Activated CD4-positive, alpha-beta T cell treated with anti-CD3 and anti-CD28 coated beads, Interleukin-2, amount 10 ng/mL, durations not matched to agents 24 days and 14 days (primary cell): ENCODE measurements at regions of chr2 and their contacts with region 1.

Region 1: DNA sequence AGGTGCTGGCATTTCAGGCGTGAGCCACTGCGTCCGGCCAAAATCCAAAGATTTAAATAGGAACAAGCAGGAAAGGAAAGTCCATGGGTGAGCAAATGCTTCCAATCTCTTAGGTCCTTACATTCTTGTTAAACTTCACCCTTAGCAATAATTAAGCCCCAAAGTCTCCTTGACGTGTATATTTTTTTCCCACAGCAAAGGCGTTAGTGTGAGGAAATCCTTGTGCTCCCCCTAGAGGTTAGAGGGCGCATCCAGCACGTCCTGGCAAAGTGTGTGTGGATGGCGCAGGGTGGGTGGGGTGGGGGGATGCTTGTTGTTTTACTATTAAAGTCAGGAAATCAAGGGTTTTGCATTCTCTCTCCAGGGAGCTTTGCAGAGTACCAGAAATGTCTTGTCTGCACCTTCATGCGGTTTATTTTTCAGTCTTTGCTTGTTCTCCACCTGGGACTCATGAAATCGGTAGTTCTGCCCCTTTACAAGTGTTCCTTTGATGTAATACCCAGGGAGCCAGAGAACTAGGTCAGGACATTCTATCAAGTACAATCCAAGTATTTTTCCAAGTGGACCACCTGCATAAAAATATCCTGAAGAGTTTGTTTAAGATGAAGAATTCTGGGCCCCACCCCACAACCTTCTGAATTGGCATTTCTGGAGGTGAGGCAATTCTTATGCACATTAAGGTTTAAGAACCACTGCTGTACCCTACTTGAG is 22.2 kb upstream of the ITSN2 start:
- DNase-seq: peak; percentile 86
- H3K4me3 Mint-ChIP-seq: no peak overlapping the region
- H3K27ac Mint-ChIP-seq: no peak overlapping the region
- H3K4me1 Mint-ChIP-seq: peaks cover 1% of the 10 kb centered on the region
- H3K27me3 Mint-ChIP-seq: peaks cover 4% of the 10 kb centered on the region

Region 2: GRCh38 chr2:23824777-23825212 is 557.7 kb before region 1 on chr2:
- intact Hi-C with region 1: loop called (anchors 2 kb)
- DNase-seq: peak; percentile 83
- H3K4me3 Mint-ChIP-seq: no peak overlapping the region
- H3K27ac Mint-ChIP-seq: no peak overlapping the region
- H3K4me1 Mint-ChIP-seq: peaks cover 2% of the 10 kb centered on the region
- H3K27me3 Mint-ChIP-seq: no peaks in the 10 kb centered on the region

Region 3: GRCh38 chr2:24238158-24238557 is 144.4 kb before region 1 on chr2:
- intact Hi-C with region 1: loop called (anchors 5 kb)
- DNase-seq: no peak
- H3K4me3 Mint-ChIP-seq: no peak overlapping the region
- H3K27ac Mint-ChIP-seq: no peak overlapping the region
- H3K4me1 Mint-ChIP-seq: no peaks in the 10 kb centered on the region
- H3K27me3 Mint-ChIP-seq: no peaks in the 10 kb centered on the region